ENCODE measurements at regions of chr20 and their contacts with region 1.

Region 1: GRCh38 chr20:37990571-37991151 is 42.6 kb downstream of the TTI1 start:
- DNase-seq: peak; percentile 86
- CTCF ChIP-seq: no peak

Region 2: GRCh38 chr20:37564388-37565133 is 426.1 kb before region 1 on chr20:
- in situ Hi-C with region 1: loop called (anchors 10 kb)
- DNase-seq: peak; percentile 89
- CTCF ChIP-seq: peak; percentile 96

Region 3: DNA sequence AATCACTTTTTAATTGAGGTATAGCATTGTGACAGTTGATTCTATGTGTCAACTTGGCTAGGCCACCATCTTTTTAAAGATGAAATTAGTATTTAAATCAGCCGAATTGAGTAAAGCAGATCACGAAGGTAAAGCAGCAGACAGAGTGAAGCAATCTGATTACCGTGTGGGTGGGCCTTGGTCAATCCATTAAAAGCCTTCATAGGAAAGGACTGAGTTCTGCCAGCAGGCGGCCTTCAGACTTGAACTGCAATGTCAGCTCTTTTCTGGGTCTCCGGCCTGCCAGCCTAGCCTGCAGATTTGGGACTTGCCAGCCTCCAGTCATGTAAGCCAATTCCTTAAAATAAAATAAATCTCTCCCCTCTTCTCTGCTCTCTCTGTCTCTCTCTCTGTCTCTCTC is 196.9 kb after region 1 on chr20:
- in situ Hi-C with region 1: no loop called
- DNase-seq: no peak
- CTCF ChIP-seq: no peak

Measured in GM13976 (cell line).